ENCODE measurements at regions of chr4 and their contacts with region 1.

Region 1: GRCh38 chr4:37754410-37755185 is 68.4 kb upstream of the RELL1 start:
- DNase-seq: no peak
- H3K4me3 ChIP-seq: no peak overlapping the region
- H3K27ac ChIP-seq: no peak overlapping the region
- H3K4me1 ChIP-seq: peaks cover 10% of the 10 kb centered on the region
- H3K27me3 ChIP-seq: no peaks in the 10 kb centered on the region
- CTCF ChIP-seq: no peak

Region 2: DNA sequence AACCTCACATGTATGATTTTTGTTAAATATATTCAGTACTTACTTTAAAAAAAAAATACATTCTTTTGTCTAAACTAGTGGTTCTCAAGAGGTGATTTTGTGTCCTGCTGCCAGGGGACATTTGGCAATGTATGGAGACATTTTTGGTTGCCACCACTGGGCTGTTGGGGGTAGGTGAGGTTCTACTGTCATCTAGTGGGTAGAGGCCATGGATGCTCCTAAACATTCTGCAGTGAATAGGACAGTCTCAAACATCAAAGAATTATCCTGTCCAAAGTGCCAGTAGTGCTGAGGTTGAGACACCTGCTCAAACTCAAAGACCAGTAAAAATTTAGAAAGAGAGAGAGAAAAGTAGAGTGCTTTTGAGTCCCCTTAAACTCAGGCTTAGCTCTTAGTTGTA is 39.0 kb after region 1 on chr4:
- CTCF ChIA-PET with region 1: no interaction called
- dilution Hi-C with region 1: loop called (anchors 5 kb)
- in situ Hi-C with region 1: no loop called
- intact Hi-C with region 1: no loop called
- DNase-seq: peak; percentile 3
- H3K4me3 ChIP-seq: no peak overlapping the region
- H3K27ac ChIP-seq: no peak overlapping the region
- H3K4me1 ChIP-seq: no peaks in the 10 kb centered on the region
- H3K27me3 ChIP-seq: peaks cover 3% of the 10 kb centered on the region
- CTCF ChIP-seq: peak; percentile 57 to 91

Measured in mammary epithelial cell (primary cell).